Heart right ventricle (tissue), 16 donors: ENCODE measurements at regions of chr5 and their contacts with region 1.

Region 1: GRCh38 chr5:180126726-180127681 is 55.4 kb upstream of the RNF130 start:
- DNase-seq: peak in 1 of 2 donors; percentile 42
- ATAC-seq: peak in 6 of 8 donors; percentile 27 to 71 (median 46)
- H3K4me3 ChIP-seq: no peak overlapping the region
- H3K27ac ChIP-seq: no peak overlapping the region
- H3K4me1 ChIP-seq: peaks cover 0 to 6% (median 0%) of the 10 kb centered on the region in 9 donors
- H3K27me3 ChIP-seq: peaks cover 0 to 43% (median 30%) of the 10 kb centered on the region in 7 donors
- CTCF ChIP-seq: peak; percentile 65 to 94 (median 77)

Region 2: GRCh38 chr5:180209137-180209581 is 82.2 kb after region 1 on chr5 and contains the start of gene RASGEF1C:
- intact Hi-C with region 1: loop called in 8 of 10 experiments (anchors 2 to 10 kb)
- DNase-seq: peak in 1 of 2 donors; percentile 68
- ATAC-seq: peak; percentile 63 to 93 (median 74)
- H3K4me3 ChIP-seq: peak within 1 kb of the TSS in 9 of 10 donors; percentile 12 to 41 (median 36)
- H3K27ac ChIP-seq: no peak within 1 kb of the TSS
- H3K4me1 ChIP-seq: peaks cover 0 to 9% (median 5%) of the 10 kb centered on the region in 9 donors
- H3K27me3 ChIP-seq: peaks cover 10 to 69% (median 43%) of the 10 kb centered on the region in 7 donors
- CTCF ChIP-seq: peak in 6 of 9 donors; percentile 12 to 52 (median 34)
- total RNA-seq, gene RASGEF1C: 0.17 to 0.44 (median 0.24) TPM in 4 of 10 donors, not detected in the others

Region 3: GRCh38 chr5:180328296-180329137 is 201.5 kb after region 1 on chr5:
- intact Hi-C with region 1: loop called in 5 of 10 experiments (anchors 5 to 10 kb)
- DNase-seq: peak; percentile 70 to 81
- ATAC-seq: peak in 6 of 8 donors; percentile 33 to 61 (median 42)
- H3K4me3 ChIP-seq: no peak overlapping the region
- H3K27ac ChIP-seq: no peak overlapping the region
- H3K4me1 ChIP-seq: peaks cover 0 to 26% (median 0%) of the 10 kb centered on the region in 9 donors
- H3K27me3 ChIP-seq: peaks cover 0 to 20% (median 7%) of the 10 kb centered on the region in 7 donors
- CTCF ChIP-seq: peak; percentile 38 to 86 (median 72)